ENCODE measurements at regions of chr12 and their contacts with region 1.

Region 1: DNA sequence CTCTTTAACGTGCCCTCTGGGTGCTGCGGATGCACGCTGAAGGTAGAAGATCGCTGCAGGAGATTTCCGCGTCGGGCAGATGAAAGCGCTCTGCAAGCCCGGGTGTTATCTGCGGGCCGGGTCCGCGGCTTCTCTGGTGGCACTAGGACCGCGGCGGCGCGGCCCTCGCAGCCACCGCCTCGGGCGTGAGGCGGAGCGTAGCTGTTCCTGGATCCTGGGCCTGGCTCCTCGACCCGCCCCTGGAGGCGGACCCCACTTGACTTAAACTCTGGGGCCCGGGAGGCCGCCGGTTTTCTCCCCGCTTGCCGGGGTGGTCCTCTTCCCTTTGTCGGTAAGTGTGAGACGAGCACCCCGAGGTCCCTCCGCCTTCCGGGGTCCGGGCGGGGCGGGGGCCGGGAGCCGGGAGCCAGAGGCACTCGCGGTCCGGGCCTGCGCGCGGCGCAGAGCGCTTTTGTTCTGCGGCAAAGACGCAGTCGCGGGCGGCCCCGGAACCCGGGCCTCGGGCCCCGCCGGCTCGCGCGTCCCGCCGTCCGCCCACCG is at the start of gene RESF1:
- DNase-seq: peak; percentile 90
- H3K4me3 Mint-ChIP-seq: peak within 1 kb of the TSS; percentile 95
- H3K27ac Mint-ChIP-seq: peak within 1 kb of the TSS; percentile 97
- H3K4me1 Mint-ChIP-seq: peaks cover 68% of the 10 kb centered on the region
- H3K27me3 Mint-ChIP-seq: no peaks in the 10 kb centered on the region
- total RNA-seq, gene RESF1: 62.4 to 67.0 TPM

Region 2: DNA sequence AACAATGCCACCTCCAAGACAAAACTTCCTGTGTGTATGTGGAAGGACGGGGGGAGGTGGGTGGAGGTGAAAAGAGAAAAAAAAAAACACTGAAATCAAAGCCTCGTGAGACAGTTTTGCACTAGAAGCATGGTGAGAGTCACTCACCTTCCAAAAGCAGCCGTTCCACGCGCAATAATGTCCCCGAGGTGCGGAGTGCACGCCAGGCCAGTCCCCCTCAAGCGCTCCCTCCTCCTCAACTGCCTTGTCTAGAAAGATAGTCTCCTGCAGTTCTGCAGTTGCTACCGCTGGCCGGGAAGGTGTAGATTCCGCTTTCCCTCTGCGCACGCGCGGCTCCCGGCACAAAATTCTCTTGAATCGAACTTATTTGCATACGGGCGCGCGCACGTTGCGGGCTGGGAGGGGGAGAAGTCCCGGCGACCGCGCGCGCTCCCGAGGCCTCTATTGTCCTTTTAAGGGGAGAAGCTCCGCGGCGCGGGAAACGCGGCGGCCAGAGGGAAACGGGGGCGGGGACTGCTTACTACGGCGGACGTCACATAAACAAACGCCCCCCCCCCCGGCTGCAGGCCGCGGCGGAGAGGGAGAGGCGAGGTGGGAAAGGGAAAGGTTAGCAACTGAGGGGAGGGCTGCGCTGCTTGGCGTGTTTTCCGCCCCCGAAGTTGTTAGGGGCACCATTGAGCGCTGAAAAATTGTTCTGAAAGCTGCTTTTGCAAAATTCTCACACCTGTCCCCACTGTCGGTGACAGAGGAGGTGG is 633.2 kb before region 1 on chr12 and contains the start of gene SINHCAF:
- CTCF ChIA-PET with region 1: no interaction called
- POLR2A ChIA-PET with region 1: no interaction called
- intact Hi-C with region 1: loop called (anchors 1 kb)
- DNase-seq: peak; percentile 99
- H3K4me3 Mint-ChIP-seq: peak within 1 kb of the TSS; percentile 100
- H3K27ac Mint-ChIP-seq: peak within 1 kb of the TSS; percentile 99
- H3K4me1 Mint-ChIP-seq: peaks cover 24% of the 10 kb centered on the region
- H3K27me3 Mint-ChIP-seq: peaks cover 2% of the 10 kb centered on the region
- total RNA-seq, gene SINHCAF: 181 to 186 TPM

Region 3: DNA sequence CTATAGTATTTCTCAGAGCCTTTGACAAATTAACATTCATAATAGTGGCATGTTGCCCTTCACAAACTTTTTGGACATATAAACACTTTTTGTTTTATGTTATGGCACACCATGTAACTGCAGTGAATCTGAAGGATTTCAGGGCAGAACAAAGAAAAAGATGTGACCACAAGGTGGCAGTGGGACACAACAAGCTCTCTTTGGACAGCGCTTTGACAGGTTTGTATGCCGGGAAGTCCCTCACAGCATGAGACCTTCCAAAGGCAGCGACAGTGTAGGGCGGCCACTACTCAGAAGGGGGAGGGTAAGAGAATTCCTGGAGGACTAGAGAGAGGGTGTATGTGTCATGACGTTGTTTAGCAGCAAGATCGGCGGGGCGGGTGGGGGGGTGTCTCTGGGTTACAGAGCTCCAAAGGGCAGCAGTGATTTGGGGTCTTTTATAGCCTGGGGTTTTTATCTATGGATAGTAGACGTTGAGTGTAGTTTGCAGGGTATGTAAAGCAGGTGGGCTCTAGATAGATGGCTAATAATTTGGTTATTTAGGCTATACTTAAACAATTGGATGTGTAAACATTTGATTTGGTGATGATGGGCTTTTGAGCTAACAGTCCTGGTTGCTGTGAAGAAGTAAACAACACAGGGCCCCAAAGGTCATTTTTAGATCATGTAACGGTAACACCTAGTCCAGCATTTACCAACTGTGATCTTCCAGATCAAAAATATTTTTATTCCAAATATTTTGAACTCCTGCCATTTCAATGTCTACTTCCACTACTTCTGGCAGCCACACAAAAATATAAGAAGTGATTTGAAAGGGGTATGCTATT is 276.9 kb before region 1 on chr12:
- CTCF ChIA-PET with region 1: interaction called, 5 read pairs
- POLR2A ChIA-PET with region 1: no interaction called
- intact Hi-C with region 1: loop called (anchors 1 kb)
- DNase-seq: peak; percentile 77
- H3K4me3 Mint-ChIP-seq: no peak overlapping the region
- H3K27ac Mint-ChIP-seq: peak overlapping the region; percentile 44
- H3K4me1 Mint-ChIP-seq: peaks cover 9% of the 10 kb centered on the region
- H3K27me3 Mint-ChIP-seq: no peaks in the 10 kb centered on the region

Region 4: DNA sequence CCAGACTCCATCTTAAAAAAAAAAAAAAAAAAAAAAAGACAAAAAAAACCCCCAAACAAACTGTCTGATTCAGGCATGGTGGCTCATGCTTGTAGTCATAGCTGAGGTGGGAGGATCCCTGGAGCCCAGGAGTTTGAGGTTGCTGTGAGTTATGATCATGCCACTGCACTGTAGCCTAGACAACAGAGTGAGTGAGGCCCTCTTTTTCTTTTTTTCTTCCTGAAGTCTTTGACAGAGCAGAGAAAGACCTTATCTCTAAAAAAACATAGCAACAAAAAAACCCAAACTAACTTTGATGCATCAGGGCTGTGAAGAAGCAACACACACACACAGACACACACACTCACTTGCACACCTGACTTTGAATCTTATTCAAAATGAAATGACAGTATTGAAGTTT is 222.8 kb before region 1 on chr12:
- CTCF ChIA-PET with region 1: no interaction called
- POLR2A ChIA-PET with region 1: interaction called, 13 read pairs
- intact Hi-C with region 1: loop called (anchors 1 kb)
- DNase-seq: peak; percentile 84
- H3K4me3 Mint-ChIP-seq: no peak overlapping the region
- H3K27ac Mint-ChIP-seq: peak overlapping the region; percentile 74
- H3K4me1 Mint-ChIP-seq: peaks cover 56% of the 10 kb centered on the region
- H3K27me3 Mint-ChIP-seq: no peaks in the 10 kb centered on the region

Region 5: DNA sequence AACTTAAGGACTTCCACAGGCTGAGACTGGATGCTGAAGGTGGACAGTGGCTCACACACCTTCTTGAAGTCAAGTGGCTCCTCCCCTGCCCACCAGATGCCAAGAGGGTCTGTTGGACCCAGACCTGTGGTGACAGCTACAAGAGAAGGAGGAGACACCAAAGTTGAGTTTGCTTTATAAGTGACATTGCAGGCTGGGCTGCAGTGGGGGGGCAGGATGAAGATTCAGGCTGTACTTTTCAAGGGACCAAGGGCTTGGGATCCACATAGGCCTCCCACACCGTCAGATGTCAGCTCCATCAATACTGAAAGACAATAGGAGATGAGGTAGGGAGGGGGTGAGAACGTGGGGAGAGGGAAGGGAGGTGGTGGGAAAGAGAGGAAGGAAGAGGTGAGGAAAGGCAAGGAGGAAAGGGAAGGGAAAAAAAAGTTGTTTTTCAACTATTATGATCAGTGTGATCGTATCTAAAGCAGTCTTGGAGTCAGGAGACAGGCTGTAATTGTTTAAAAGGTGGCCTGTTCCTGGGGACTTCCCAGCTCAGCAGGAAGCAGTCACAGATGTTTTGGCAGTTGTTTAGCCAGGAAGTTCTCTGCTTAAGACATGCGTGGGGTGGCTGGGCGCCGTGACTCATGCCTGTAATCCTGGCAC is 84.1 kb before region 1 on chr12:
- CTCF ChIA-PET with region 1: no interaction called
- POLR2A ChIA-PET with region 1: interaction called, 11 read pairs
- intact Hi-C with region 1: no loop called
- DNase-seq: peak; percentile 86
- H3K4me3 Mint-ChIP-seq: peak overlapping the region; percentile 47
- H3K27ac Mint-ChIP-seq: peak overlapping the region; percentile 97
- H3K4me1 Mint-ChIP-seq: peaks cover 27% of the 10 kb centered on the region
- H3K27me3 Mint-ChIP-seq: no peaks in the 10 kb centered on the region

Region 6: DNA sequence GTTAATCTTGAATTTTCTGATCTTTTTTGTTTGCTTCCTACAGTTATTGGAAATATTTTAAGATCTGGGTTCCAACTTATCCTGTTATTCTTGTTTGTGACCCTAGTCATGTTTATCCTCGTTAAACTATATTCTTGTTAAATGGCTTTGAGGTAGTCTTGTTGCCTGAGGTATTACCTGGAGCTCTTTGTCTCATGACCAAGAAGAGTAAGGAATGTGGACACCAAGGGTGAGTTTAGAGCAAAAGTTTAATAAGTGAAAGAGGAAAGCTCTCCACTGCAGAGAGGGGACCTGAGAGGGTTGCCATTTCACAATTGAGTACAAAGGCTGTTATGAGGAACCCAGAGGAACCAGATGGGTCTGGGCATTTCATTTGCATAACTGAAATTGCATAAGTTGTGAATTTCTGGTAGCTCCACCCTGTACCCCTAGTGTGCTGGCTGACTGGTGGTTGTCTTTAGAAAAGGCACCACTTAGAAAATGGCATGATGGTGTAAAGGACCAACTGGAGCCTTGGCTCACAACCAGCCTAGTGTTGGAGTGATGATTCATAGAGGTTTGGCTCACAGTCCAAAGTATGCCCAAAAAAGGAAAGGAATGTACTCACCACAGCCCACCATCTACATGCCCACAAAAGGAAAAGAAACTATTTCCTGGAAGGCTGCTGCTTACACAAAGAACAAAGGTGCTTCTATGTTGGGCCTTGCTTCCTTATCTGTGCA is 36.7 kb before region 1 on chr12:
- CTCF ChIA-PET with region 1: no interaction called
- POLR2A ChIA-PET with region 1: no interaction called
- intact Hi-C with region 1: no loop called
- DNase-seq: no peak
- H3K4me3 Mint-ChIP-seq: no peak overlapping the region
- H3K27ac Mint-ChIP-seq: peak overlapping the region; percentile 30
- H3K4me1 Mint-ChIP-seq: peaks cover 8% of the 10 kb centered on the region
- H3K27me3 Mint-ChIP-seq: no peaks in the 10 kb centered on the region

Region 7: DNA sequence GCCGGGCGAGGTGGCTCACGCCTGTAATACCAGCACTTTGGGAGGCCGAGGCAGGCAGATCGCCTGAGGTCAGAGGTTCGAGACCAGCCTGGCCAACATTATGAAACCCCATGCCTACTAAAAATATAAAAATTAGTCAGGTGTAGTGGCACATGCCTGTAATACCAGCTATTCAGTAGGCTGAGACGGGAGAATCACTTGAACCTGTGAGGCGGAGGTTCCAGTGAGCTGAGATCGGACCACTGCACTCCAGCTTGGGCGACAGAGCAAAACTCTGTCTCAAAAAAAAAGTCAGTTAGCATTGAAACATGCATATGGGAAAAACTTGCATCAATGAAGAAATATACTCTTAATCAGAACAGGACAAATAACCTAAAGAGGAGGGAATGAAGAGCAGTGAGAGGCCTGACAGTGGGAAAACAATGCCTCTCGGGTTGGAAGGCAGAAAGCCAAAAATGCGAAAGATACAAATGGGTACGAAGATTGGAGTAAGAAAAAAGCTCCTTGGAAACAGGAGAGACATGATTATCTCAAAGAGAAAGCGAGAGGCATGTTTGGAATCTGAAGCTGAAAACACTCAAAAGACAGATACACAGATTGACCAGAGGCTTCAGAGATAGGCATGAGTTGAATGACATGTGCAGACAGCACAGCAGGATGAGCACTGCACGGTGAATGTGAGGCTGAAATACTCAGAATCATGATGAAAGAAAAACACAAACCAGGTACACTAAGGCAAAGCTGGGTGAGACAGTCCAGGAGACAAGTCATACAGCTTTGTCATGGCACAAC is 30.5 kb after region 1 on chr12:
- CTCF ChIA-PET with region 1: interaction called, 6 read pairs
- POLR2A ChIA-PET with region 1: interaction called, 10 read pairs
- intact Hi-C with region 1: loop called (anchors 5 kb)
- DNase-seq: no peak
- H3K4me3 Mint-ChIP-seq: no peak overlapping the region
- H3K27ac Mint-ChIP-seq: peak overlapping the region; percentile 78
- H3K4me1 Mint-ChIP-seq: peaks cover 57% of the 10 kb centered on the region
- H3K27me3 Mint-ChIP-seq: no peaks in the 10 kb centered on the region

Region 8: GRCh38 chr12:32069071-32069470 is 109.8 kb after region 1 on chr12:
- CTCF ChIA-PET with region 1: no interaction called
- POLR2A ChIA-PET with region 1: no interaction called
- intact Hi-C with region 1: no loop called
- DNase-seq: no peak
- H3K4me3 Mint-ChIP-seq: no peak overlapping the region
- H3K27ac Mint-ChIP-seq: no peak overlapping the region
- H3K4me1 Mint-ChIP-seq: no peaks in the 10 kb centered on the region
- H3K27me3 Mint-ChIP-seq: no peaks in the 10 kb centered on the region

Region 9: DNA sequence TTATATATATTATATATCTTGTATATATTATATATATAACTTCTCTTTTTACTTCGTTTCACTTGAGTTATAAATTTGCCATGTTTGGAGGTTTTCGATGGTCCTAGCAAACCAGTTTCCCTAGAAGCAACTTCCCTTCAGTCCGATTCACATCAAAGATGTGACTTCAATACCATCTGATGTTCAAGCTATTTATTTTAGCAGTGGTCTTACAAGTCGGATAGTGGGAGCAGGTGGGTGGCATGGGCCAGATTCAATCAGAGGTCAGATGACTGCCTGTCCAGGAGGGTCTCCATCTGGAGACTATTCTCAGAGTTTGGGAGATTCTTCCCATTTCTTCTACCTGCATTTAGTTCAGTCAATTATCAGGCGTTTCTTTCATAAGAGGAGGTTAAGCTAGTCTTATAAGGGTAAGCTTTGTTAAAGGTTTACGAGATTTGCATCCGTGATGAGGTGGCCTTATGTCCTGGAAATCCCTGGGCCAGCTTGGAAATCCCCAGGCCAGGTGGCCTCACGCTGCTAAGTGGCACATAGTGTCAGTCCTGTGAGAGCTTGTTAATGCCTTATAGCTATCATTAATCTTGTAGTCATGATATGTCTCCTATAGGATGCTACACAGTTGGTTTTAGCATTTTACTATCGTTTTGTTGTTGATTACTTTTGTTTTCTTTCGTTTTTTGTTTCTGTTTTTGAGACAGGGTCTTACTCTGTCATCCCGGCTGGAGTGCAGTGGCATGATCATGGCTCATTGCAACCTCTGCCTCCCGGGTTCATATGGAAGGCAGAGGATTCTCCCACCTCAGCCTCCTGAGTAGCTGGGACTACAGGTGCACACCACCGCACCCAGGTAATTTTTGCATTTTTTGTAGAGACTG is 293.2 kb after region 1 on chr12:
- CTCF ChIA-PET with region 1: no interaction called
- POLR2A ChIA-PET with region 1: no interaction called
- intact Hi-C with region 1: loop called (anchors 10 kb)
- DNase-seq: no peak
- H3K4me3 Mint-ChIP-seq: no peak overlapping the region
- H3K27ac Mint-ChIP-seq: no peak overlapping the region
- H3K4me1 Mint-ChIP-seq: peaks cover 2% of the 10 kb centered on the region
- H3K27me3 Mint-ChIP-seq: no peaks in the 10 kb centered on the region